ENCODE measurements at regions of chr6 and their contacts with region 1.

Region 1: DNA sequence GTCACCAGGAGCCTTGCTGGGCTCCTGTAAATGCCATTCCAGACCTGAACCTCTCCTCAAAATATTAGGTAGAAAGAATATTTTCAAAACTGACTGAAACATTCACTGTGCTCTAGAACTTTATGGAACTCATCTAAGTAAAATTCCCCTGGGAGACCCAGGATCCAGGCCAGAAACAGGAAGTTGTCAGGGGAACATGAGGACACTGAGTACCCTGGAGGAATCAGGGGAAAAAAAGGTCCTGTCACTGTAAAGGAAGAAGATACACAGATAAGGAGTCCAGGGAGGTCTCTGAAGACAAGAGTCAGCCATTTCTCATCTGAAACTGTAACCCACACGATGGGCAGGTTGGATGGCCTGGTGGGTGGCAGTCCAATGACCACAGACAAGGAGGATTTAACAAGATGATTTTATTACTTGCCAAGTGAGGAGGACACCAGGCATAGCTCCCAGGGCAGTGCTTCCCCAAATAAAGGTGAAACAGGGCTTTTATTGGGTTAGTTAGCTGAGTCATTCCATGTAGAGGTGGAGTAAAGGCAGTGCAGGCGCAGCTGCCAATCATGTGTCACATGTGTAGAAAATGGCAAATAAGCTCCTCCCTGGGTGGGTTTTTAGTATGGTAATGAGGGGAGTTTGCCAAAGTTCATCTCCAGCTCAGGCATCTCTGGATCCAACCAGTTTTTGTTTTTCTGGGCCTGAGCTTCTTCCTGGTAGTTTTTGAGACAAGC is 138.5 kb downstream of the RCAN2 start:
- DNase-seq: peak in 1 of 2 donors; percentile 26
- ATAC-seq: peak; percentile 51 to 60
- H3K4me3 ChIP-seq: no peak overlapping the region
- H3K27ac ChIP-seq: peak overlapping the region; percentile 46 to 75 (median 57)
- H3K4me1 ChIP-seq: peaks cover 40 to 52% of the 10 kb centered on the region in 2 donors
- H3K27me3 ChIP-seq: no peaks in the 10 kb centered on the region
- CTCF ChIP-seq: no peak
- POLR2A ChIP-seq: no peak

Region 2: DNA sequence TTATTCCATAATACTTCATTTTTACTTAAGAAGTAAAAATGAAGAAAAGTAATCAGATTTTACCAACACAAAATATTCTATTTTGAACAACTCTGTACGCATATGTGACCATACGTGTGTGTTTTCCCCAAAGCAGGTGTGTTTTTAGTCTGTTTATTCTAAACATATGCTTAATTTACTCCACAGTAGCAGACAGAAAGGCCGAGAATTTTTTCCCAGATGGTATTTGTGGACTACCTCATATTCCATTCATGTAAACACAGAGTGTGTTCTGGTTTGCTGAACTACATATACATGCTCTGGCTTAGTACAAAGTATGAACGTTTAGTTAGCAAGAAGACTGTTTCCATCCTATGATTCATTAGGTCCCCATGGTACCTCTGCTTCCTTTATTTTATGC is 1257.9 kb before region 1 on chr6:
- in situ Hi-C with region 1: no loop called
- intact Hi-C with region 1: no loop called
- DNase-seq: no peak
- ATAC-seq: no peak
- H3K4me3 ChIP-seq: no peak overlapping the region
- H3K27ac ChIP-seq: no peak overlapping the region
- H3K4me1 ChIP-seq: no peaks in the 10 kb centered on the region
- H3K27me3 ChIP-seq: no peaks in the 10 kb centered on the region
- CTCF ChIP-seq: no peak
- POLR2A ChIP-seq: no peak

Region 3: DNA sequence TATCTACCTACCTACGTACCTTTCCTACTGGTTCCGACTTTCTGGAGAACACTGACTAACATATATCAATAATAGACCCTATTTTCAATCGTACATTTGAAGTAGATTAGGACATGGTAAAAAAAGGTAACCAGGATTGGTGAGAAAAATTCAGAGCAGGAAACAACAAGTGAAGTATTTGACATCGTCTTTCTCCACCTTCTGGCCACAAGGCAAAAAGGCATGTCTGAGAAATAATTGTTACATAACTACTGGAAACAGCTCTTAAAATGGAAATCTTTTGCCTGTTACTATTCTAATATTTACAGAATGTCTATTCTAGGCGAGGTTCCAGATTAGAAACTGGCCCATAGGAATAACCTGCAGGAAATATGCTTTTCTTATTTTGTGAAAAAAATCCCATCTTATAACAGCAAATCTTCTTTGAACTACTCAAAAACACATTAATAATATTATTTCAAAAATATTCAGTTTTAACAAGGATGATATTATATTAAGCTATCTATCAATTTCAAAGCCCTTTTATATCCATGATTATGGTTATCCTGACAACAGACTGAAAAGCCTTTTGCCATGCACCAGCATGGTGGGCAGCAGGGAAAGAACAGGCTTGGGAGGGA is 57.7 kb after region 1 on chr6:
- in situ Hi-C with region 1: no loop called
- intact Hi-C with region 1: loop called (anchors 5 kb)
- DNase-seq: peak in 1 of 2 donors; percentile 28
- ATAC-seq: peak in 1 of 2 donors; percentile 51
- H3K4me3 ChIP-seq: no peak overlapping the region
- H3K27ac ChIP-seq: peak overlapping the region in 3 of 4 donors; percentile 12 to 34 (median 25)
- H3K4me1 ChIP-seq: peaks cover 36 to 63% of the 10 kb centered on the region in 2 donors
- H3K27me3 ChIP-seq: no peaks in the 10 kb centered on the region
- CTCF ChIP-seq: peak; percentile 44 to 94 (median 79)
- POLR2A ChIP-seq: no peak

Measured in gastrocnemius medialis (tissue), 4 donors.